ENCODE measurements at regions of chr12 and their contacts with region 1.

Region 1: DNA sequence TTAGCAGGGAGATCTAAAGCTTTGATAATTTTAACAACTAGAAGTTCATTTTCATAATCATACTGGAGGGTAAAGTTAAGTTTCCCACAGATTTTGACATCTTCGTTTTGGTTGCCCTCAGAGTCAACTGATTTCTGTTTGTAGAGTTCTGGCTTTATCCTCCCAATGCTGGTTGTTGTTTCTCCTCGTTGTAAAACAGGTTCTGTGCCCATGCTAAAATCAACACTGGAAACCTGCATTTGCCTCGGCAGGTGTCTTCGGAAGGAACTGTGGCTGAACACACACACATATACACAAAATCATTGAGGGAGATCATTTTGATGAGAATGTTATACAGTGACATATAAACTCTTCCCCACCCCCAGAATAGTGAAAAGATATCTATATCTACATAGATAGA is 32.5 kb downstream of the SYT10 start:
- DNase-seq: no peak
- H3K4me3 Mint-ChIP-seq: no peak overlapping the region
- H3K27ac Mint-ChIP-seq: no peak overlapping the region
- H3K4me1 Mint-ChIP-seq: no peaks in the 10 kb centered on the region
- H3K27me3 Mint-ChIP-seq: no peaks in the 10 kb centered on the region

Region 2: DNA sequence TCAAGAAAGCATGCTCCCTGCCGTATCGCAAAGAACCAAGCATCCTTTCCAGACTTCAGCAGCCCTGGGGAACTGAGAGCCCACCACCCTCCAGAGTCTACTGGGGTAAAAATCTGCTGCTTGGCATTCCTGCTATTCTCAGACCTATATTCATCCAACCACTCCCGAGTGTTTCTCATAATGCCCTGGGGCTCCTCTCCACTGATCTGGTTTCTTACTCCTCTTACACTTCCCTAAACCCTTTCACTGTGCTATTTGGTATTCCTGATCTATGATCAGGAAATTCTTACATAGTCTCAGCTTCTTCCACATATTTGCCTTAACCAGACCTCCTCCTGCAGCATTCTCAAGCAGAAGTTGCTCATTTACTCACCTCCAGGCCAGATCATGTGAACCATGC is 49.9 kb before region 1 on chr12:
- CTCF ChIA-PET with region 1: no interaction called
- intact Hi-C with region 1: loop called (anchors 5 kb)
- DNase-seq: no peak
- H3K4me3 Mint-ChIP-seq: no peak overlapping the region
- H3K27ac Mint-ChIP-seq: no peak overlapping the region
- H3K4me1 Mint-ChIP-seq: no peaks in the 10 kb centered on the region
- H3K27me3 Mint-ChIP-seq: no peaks in the 10 kb centered on the region